Activated CD4-positive, alpha-beta T cell treated with anti-CD3 and anti-CD28 coated beads for 36 hours (primary cell): ENCODE measurements at regions of chr10 and their contacts with region 1.

Region 1: GRCh38 chr10:124719213-124719851 is 24.8 kb downstream of the FAM53B start:
- DNase-seq: peak; percentile 83
- ATAC-seq: peak; percentile 44
- H3K4me3 Mint-ChIP-seq: peak overlapping the region; percentile 68
- H3K27ac Mint-ChIP-seq: peak overlapping the region; percentile 95
- H3K4me1 Mint-ChIP-seq: peaks cover 95% of the 10 kb centered on the region
- H3K27me3 Mint-ChIP-seq: no peaks in the 10 kb centered on the region

Region 2: DNA sequence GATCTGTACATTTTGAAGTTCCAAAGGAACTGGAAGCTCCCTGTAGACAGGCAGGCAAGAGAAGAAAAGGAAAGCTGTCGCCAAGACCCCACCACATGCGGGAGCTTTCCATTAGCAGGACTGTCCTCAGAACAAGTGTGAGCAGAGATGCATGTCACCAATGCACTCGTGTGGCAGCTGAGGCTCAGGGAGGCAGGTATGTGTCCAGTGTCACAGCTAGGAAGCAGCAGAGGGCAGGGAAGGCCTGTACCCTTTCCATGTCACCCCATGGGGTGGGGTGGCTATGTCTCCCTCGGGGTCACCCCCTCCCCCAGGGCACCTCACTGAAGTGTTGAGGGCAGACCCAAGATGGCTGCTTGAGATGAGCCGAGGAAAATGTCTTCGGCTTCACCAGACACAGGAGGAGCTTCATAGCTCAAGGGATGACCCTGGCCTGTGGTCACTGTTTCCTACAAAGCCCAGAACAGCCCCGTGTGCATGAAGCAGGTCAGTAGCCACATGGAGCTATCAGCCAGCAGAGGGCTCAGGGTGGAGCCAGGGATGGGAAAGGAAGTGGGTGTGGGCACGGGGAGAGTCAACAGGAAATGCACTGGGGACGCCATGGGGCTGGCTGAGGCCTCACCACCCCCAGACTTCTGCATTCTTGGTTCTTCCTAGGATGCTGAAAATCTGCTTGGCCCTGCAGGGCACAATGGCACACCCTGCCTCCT is 71.8 kb before region 1 on chr10:
- CTCF ChIA-PET with region 1: interaction called, 6 read pairs
- POLR2A ChIA-PET with region 1: interaction called, 5 read pairs
- intact Hi-C with region 1: loop called (anchors 2 kb)
- DNase-seq: peak; percentile 80
- ATAC-seq: peak; percentile 74
- H3K4me3 Mint-ChIP-seq: peak overlapping the region; percentile 40
- H3K27ac Mint-ChIP-seq: peak overlapping the region; percentile 85
- H3K4me1 Mint-ChIP-seq: peaks cover 75% of the 10 kb centered on the region
- H3K27me3 Mint-ChIP-seq: no peaks in the 10 kb centered on the region

Region 3: GRCh38 chr10:124677749-124678556 is 41.4 kb before region 1 on chr10:
- CTCF ChIA-PET with region 1: interaction called, 11 read pairs
- POLR2A ChIA-PET with region 1: interaction called, 4 read pairs
- intact Hi-C with region 1: no loop called
- DNase-seq: peak; percentile 30
- ATAC-seq: peak; percentile 40
- H3K4me3 Mint-ChIP-seq: no peak overlapping the region
- H3K27ac Mint-ChIP-seq: peak overlapping the region; percentile 75
- H3K4me1 Mint-ChIP-seq: peaks cover 70% of the 10 kb centered on the region
- H3K27me3 Mint-ChIP-seq: no peaks in the 10 kb centered on the region

Region 4: GRCh38 chr10:124697830-124698544 is 21.3 kb before region 1 on chr10:
- CTCF ChIA-PET with region 1: interaction called, 32 read pairs
- POLR2A ChIA-PET with region 1: interaction called, 20 read pairs
- intact Hi-C with region 1: loop called (anchors 1 to 2 kb)
- DNase-seq: peak; percentile 71
- ATAC-seq: peak; percentile 47
- H3K4me3 Mint-ChIP-seq: peak overlapping the region; percentile 56
- H3K27ac Mint-ChIP-seq: peak overlapping the region; percentile 90
- H3K4me1 Mint-ChIP-seq: peaks cover 93% of the 10 kb centered on the region
- H3K27me3 Mint-ChIP-seq: no peaks in the 10 kb centered on the region

Region 5: DNA sequence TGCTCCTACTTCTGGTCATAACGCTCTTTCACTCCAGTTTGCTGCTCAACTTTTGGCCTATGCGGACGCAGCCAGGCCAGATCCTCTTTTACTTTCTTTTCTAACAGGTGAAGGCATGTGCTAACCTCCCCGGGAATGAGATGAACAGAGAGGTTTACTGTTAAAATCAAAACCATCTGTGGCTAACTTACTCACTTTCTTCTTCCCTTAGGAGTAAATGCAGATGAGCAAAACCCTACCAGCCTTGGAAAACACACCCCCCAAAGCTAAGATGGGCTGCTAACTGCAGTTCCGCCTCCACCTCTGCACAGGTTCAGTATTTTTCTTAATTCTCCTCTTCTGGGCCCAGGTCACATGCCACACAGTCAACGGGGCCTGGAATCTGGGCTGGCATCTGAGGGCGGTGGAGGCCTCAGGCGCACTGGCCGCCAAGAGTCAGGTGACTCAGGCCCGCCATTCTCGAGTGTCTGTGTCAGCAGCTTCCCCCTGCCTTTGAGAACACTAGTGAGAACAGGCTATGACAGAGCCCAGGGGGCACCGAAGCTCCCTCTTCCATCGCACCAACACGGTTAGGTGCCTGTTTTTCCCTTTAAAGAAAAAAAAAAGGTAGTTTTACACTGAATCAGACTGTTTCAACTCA is 13.7 kb after region 1 on chr10:
- CTCF ChIA-PET with region 1: interaction called, 100 read pairs
- POLR2A ChIA-PET with region 1: interaction called, 45 read pairs
- intact Hi-C with region 1: loop called (anchors 1 kb)
- DNase-seq: peak; percentile 87
- ATAC-seq: peak; percentile 71
- H3K4me3 Mint-ChIP-seq: peak overlapping the region; percentile 43
- H3K27ac Mint-ChIP-seq: peak overlapping the region; percentile 76
- H3K4me1 Mint-ChIP-seq: peaks cover 84% of the 10 kb centered on the region
- H3K27me3 Mint-ChIP-seq: no peaks in the 10 kb centered on the region

Region 6: GRCh38 chr10:124943301-124944092 is 224.2 kb after region 1 on chr10:
- CTCF ChIA-PET with region 1: no interaction called
- POLR2A ChIA-PET with region 1: no interaction called
- intact Hi-C with region 1: no loop called
- DNase-seq: peak; percentile 19
- ATAC-seq: peak; percentile 44
- H3K4me3 Mint-ChIP-seq: no peak overlapping the region
- H3K27ac Mint-ChIP-seq: peak overlapping the region; percentile 15
- H3K4me1 Mint-ChIP-seq: peaks cover 54% of the 10 kb centered on the region
- H3K27me3 Mint-ChIP-seq: no peaks in the 10 kb centered on the region